ENCODE measurements at regions of chr4 and their contacts with region 1.

Region 1: GRCh38 chr4:131644619-131645018 is 1504.5 kb upstream of the PCDH10 start:
- DNase-seq: peak; percentile 38
- ATAC-seq: peak; percentile 79
- H3K4me3 ChIP-seq: no peak overlapping the region
- H3K27ac ChIP-seq: no peak overlapping the region
- H3K4me1 ChIP-seq: no peaks in the 10 kb centered on the region
- H3K27me3 ChIP-seq: no peaks in the 10 kb centered on the region
- CTCF ChIP-seq: peak; percentile 58

Region 2: DNA sequence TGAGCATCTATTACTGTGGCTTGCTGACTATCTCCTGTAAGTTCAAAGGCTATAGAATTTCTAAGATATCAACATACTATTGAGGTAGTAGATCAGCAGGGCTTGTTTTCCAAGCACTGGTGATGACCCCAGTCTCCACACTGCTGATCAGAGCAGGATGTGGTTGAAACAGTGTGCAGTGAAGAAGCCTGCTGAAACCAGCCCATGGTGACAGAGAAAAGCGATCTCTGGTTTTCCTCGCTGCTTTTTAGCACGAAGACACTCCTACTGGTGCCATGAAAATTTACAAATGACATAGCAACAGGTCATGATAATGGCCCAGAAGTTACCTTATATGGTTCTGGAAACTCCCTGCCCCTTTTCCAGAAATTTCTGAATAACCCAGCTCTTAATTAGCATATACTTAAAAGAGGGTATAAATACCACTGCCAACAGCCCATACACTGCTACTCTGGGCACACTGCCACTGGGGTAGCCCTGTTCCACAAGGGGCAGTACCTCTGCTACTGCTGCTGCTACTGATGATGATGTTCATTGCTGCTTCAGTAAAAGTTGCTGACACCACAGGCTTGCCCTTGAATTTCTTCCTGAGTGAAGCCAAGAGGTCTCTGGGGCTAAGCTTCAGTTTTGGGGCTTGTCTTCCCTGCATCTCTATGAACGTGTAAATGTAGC is 185.1 kb before region 1 on chr4:
- CTCF ChIA-PET with region 1: no interaction called
- POLR2A ChIA-PET with region 1: no interaction called
- intact Hi-C with region 1: loop called (anchors 10 kb)
- DNase-seq: no peak
- ATAC-seq: no peak
- H3K4me3 ChIP-seq: no peak overlapping the region
- H3K27ac ChIP-seq: no peak overlapping the region
- H3K4me1 ChIP-seq: no peaks in the 10 kb centered on the region
- H3K27me3 ChIP-seq: no peaks in the 10 kb centered on the region
- CTCF ChIP-seq: no peak